Prostate gland (tissue), 2 donors: ENCODE measurements at regions of chr18 and their contacts with region 1.

Region 1: DNA sequence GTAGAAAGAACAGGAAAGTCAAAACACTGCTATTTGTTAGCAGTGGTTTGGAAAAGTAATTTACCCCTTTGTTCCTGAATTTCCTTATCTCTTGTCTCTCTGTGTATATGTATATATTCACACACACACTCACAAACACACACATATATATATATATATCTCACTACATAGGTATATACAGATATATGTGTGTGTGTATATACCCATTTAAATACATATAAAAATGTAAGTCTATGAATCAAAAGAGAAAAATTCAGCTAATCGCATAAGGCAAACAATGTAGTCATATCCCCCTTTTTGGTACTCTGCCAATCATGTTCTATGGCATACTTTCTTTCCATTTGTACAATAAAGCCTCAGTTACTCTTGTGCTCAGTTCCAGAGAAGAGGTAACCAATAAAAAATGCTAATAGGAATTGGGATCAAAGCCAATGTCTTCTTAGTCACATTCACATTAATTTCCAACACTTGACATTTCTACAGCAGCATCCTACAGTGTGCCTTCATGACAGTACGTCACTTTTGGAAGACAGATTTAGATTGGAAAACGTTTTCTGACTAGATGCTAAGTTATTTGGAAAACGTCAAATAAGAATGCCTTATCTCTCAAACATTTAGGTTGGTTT is 94.6 kb downstream of the MC4R start:
- DNase-seq: no peak
- H3K4me3 ChIP-seq: no peak overlapping the region
- H3K27ac ChIP-seq: no peak overlapping the region
- H3K4me1 ChIP-seq: no peaks in the 10 kb centered on the region
- H3K27me3 ChIP-seq: no peaks in the 10 kb centered on the region
- CTCF ChIP-seq: no peak
- POLR2A ChIP-seq: no peak

Region 2: DNA sequence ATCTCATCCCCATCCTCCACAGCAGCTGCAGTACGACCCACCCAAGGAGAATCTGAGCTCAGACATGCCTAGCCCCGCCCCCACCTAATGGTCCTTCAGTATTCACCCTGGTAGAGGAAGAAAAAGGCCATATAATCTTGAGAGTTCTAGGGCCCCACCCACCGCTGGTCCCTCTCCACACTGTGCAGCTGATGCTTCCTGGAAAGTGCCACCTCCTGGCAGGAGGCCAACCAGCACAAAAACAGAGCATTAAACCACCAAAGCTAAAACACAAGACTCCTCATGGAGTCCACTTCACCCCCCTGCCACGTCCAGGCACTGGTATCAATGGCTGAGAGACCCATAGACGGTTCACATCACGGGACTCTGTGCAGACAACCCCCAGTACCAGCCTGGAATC is 53.9 kb after region 1 on chr18:
- intact Hi-C with region 1: loop called (anchors 10 kb)
- DNase-seq: no peak
- H3K4me3 ChIP-seq: no peak overlapping the region
- H3K27ac ChIP-seq: no peak overlapping the region
- H3K4me1 ChIP-seq: no peaks in the 10 kb centered on the region
- H3K27me3 ChIP-seq: no peaks in the 10 kb centered on the region
- CTCF ChIP-seq: no peak
- POLR2A ChIP-seq: no peak